Activated CD8-positive, alpha-beta T cell treated with anti-CD3 and anti-CD28 coated beads, Interleukin-2, amount 10 ng/mL, durations not matched to agents 7 days and 5 days (primary cell): ENCODE measurements at regions of chr1 and their contacts with region 1.

Region 1: GRCh38 chr1:65431111-65431705 is 10.7 kb downstream of the LEPR start:
- DNase-seq: no peak
- ATAC-seq: peak; percentile 49
- H3K4me3 Mint-ChIP-seq: no peak overlapping the region
- H3K27ac Mint-ChIP-seq: no peak overlapping the region
- H3K4me1 Mint-ChIP-seq: peaks cover 9% of the 10 kb centered on the region
- H3K27me3 Mint-ChIP-seq: no peaks in the 10 kb centered on the region

Region 2: GRCh38 chr1:65419681-65420589 is 11.3 kb before region 1 on chr1:
- CTCF ChIA-PET with region 1: interaction called, 11 read pairs
- POLR2A ChIA-PET with region 1: interaction called, 3 read pairs
- DNase-seq: peak; percentile 99
- ATAC-seq: peak; percentile 96
- H3K4me3 Mint-ChIP-seq: no peak overlapping the region
- H3K27ac Mint-ChIP-seq: peak overlapping the region; percentile 89
- H3K4me1 Mint-ChIP-seq: peaks cover 26% of the 10 kb centered on the region
- H3K27me3 Mint-ChIP-seq: peaks cover 12% of the 10 kb centered on the region

Region 3: GRCh38 chr1:65459397-65459768 is 28.2 kb after region 1 on chr1:
- CTCF ChIA-PET with region 1: interaction called, 61 read pairs
- POLR2A ChIA-PET with region 1: no interaction called
- DNase-seq: peak; percentile 28
- ATAC-seq: peak; percentile 49
- H3K4me3 Mint-ChIP-seq: no peak overlapping the region
- H3K27ac Mint-ChIP-seq: no peak overlapping the region
- H3K4me1 Mint-ChIP-seq: peaks cover 24% of the 10 kb centered on the region
- H3K27me3 Mint-ChIP-seq: no peaks in the 10 kb centered on the region